ENCODE measurements at regions of chr7 and their contacts with region 1.

Region 1: DNA sequence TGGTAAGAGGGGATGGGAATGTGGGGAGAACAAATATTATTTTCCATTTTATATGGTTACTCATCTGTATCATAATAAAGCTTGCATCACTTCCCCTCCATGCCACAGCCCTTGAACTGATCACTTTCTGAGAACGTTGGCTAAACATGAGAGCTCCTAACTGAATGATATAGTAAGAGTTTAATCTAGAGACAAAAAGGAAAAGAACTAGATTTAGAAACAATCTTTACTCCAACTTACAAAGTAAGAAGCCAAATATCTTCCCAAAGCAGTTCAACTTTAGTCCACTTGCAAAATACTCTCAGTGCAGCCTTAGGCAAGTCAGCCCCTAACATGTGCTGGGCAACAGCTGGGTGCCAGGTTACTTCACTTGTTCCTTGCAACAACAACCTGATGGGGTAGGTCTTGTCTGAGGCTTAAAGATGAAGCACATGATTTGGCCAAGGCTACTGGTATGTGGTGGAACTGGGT is 20.3 kb downstream of the SMURF1 start:
- DNase-seq: peak; percentile 68 to 87
- H3K4me3 ChIP-seq: no peak overlapping the region; the same call in 1 of the 2 replicates
- H3K27ac ChIP-seq: peak overlapping the region; percentile 92
- H3K4me1 ChIP-seq: peaks cover 60% of the 10 kb centered on the region
- H3K27me3 ChIP-seq: no peaks in the 10 kb centered on the region
- CTCF ChIP-seq: no peak

Region 2: GRCh38 chr7:99072126-99072525 is 51.5 kb before region 1 on chr7:
- CTCF ChIA-PET with region 1: interaction called, 3 read pairs
- POLR2A ChIA-PET with region 1: interaction called, 18 read pairs
- intact Hi-C with region 1: loop called (anchors 5 kb)
- DNase-seq: no peak
- H3K4me3 ChIP-seq: no peak overlapping the region
- H3K27ac ChIP-seq: peak overlapping the region; percentile 52; the same call in 1 of the 2 replicates
- H3K4me1 ChIP-seq: peaks cover 6% of the 10 kb centered on the region
- H3K27me3 ChIP-seq: no peaks in the 10 kb centered on the region
- CTCF ChIP-seq: no peak

Region 3: GRCh38 chr7:99098824-99099498 is 24.6 kb before region 1 on chr7:
- CTCF ChIA-PET with region 1: no interaction called
- POLR2A ChIA-PET with region 1: interaction called, 14 read pairs
- intact Hi-C with region 1: no loop called
- DNase-seq: peak; percentile 31 to 66
- H3K4me3 ChIP-seq: no peak overlapping the region
- H3K27ac ChIP-seq: peak overlapping the region; percentile 35
- H3K4me1 ChIP-seq: peaks cover 43% of the 10 kb centered on the region
- H3K27me3 ChIP-seq: no peaks in the 10 kb centered on the region
- CTCF ChIP-seq: no peak

Region 4: DNA sequence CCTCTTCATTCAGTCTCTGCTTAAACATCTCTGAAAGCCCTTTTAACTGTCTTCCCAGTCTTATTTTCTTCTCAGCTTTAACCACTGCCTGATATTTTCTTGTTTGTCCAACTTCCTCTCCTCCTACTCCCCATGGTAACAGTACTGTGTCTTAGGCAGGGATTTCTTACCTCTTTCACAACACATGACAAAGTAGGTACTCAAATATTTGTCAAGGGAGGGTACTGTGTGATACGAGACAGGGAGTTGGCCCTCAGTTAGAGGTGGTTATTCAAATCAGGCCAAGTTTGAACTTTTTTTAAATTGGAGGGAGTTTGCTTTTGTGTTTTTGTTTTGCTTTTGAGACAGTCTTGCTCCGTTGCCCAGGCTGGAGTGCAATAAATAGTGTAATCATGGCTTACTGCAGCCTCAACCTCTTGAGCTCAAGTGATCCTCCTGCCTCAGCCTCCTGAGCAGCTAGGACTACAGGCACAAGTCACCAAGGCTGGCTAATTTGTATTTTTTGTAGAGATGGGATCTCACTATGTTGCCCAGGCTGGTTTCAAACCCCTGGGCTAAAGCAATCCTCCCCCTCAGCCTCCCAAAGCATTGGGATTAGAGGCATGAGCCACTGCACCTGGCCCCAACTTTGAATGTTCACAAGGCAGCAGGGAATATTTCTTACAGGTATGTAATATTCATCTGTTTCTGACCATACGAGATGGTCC is 86.8 kb after region 1 on chr7:
- CTCF ChIA-PET with region 1: no interaction called
- POLR2A ChIA-PET with region 1: no interaction called
- intact Hi-C with region 1: loop called (anchors 1 kb)
- DNase-seq: peak; percentile 52 to 99
- H3K4me3 ChIP-seq: peak overlapping the region; percentile 20; the same call in 1 of the 2 replicates
- H3K27ac ChIP-seq: peak overlapping the region; percentile 100
- H3K4me1 ChIP-seq: peaks cover 70% of the 10 kb centered on the region
- H3K27me3 ChIP-seq: no peaks in the 10 kb centered on the region
- CTCF ChIP-seq: no peak

Region 5: GRCh38 chr7:99312316-99313203 is 189.0 kb after region 1 on chr7:
- CTCF ChIA-PET with region 1: no interaction called
- POLR2A ChIA-PET with region 1: no interaction called
- intact Hi-C with region 1: loop called (anchors 5 kb)
- DNase-seq: peak; percentile 57 to 72
- H3K4me3 ChIP-seq: no peak overlapping the region
- H3K27ac ChIP-seq: no peak overlapping the region
- H3K4me1 ChIP-seq: peaks cover 7% of the 10 kb centered on the region
- H3K27me3 ChIP-seq: no peaks in the 10 kb centered on the region
- CTCF ChIP-seq: peak; percentile 95

Measured in PC-9 (cell line).